B cell (primary cell): ENCODE measurements at regions of chr3 and their contacts with region 1.

Region 1: DNA sequence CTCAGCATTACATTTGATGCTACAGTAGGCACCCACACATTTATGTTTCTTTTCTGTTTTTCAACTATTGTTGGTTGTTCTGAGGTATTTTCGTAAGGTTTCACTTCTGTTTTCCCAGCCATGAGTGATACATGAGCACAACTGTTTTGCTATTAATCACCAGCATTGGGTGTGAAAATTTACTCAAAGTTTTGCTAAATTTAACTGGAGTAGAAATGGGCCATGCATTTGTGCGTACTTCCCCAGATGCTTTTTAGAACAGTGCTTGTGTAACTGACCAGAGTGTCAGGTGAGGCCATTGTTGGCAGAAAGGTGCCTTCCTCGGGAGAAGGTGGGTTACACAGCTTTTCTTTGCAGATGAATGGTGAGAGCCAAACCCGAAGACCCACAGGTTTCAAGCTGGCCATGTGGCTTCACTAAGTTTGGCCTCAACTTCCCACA is 70.4 kb downstream of the ST6GAL1 start:
- DNase-seq: peak; percentile 86
- ATAC-seq: peak; percentile 77
- H3K4me3 ChIP-seq: peak overlapping the region in 3 of 5 experiments; percentile 12 to 32 (median 22)
- H3K4me3 Mint-ChIP-seq: peak overlapping the region; percentile 88
- H3K27ac ChIP-seq: peak overlapping the region; percentile 94 to 98
- H3K27ac Mint-ChIP-seq: peak overlapping the region; percentile 99
- H3K4me1 ChIP-seq: peaks cover 82 to 93% of the 10 kb centered on the region in 2 donors
- H3K4me1 Mint-ChIP-seq: peaks cover 87% of the 10 kb centered on the region
- H3K27me3 ChIP-seq: no peaks in the 10 kb centered on the region
- H3K27me3 Mint-ChIP-seq: no peaks in the 10 kb centered on the region
- CTCF ChIP-seq: no peak

Region 2: DNA sequence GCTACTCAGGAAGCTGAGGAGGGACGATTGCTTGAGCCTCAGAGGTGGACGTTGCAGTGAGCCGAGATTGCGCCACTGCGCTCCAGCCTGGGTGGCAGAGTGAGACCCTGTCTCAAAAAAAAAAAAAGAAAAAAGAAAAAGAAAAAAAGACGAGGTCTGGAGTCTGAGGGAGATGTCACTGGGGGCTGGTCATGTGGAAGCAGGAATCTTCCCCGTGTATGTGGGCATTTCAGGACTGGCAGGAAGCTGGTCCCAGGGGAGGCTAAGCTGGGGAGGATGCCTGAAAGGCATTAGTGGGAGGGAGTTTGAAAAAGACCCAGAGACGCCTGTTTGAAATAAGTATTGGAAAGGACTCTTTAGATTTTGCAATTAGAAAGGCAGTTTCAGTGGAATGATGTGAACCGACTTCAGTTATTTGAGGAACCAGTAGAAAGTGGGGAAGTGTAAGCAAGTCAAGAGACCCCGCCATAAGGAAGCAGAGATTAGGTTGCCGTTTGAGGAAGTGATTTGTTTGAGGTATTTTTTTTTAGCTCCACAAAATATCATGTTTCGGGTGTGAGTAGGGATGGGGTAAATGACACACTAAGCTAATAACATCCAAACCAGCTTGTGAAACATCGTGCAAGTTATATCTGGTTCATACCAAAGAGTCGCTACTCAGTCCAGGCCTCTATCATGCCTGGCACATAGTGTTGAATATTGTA is 14.9 kb before region 1 on chr3:
- CTCF ChIA-PET with region 1: interaction called, 5 read pairs
- POLR2A ChIA-PET with region 1: interaction called, 6 read pairs
- intact Hi-C with region 1: loop called (anchors 1 kb)
- DNase-seq: peak; percentile 80
- ATAC-seq: peak; percentile 85
- H3K4me3 ChIP-seq: peak overlapping the region in 4 of 5 experiments; percentile 18 to 48 (median 27)
- H3K4me3 Mint-ChIP-seq: peak overlapping the region; percentile 78
- H3K27ac ChIP-seq: peak overlapping the region; percentile 78 to 80
- H3K27ac Mint-ChIP-seq: peak overlapping the region; percentile 82
- H3K4me1 ChIP-seq: peaks cover 64 to 83% of the 10 kb centered on the region in 2 donors
- H3K4me1 Mint-ChIP-seq: peaks cover 87% of the 10 kb centered on the region
- H3K27me3 ChIP-seq: no peaks in the 10 kb centered on the region
- H3K27me3 Mint-ChIP-seq: no peaks in the 10 kb centered on the region
- CTCF ChIP-seq: no peak

Region 3: GRCh38 chr3:187016639-187017345 is 16.1 kb after region 1 on chr3:
- CTCF ChIA-PET with region 1: interaction called, 8 read pairs
- POLR2A ChIA-PET with region 1: interaction called, 19 read pairs
- intact Hi-C with region 1: loop called (anchors 1 kb)
- DNase-seq: peak; percentile 83
- ATAC-seq: peak; percentile 58
- H3K4me3 ChIP-seq: peak overlapping the region in 2 of 5 experiments; percentile 4 to 28
- H3K4me3 Mint-ChIP-seq: peak overlapping the region; percentile 75
- H3K27ac ChIP-seq: peak overlapping the region; percentile 92 to 96
- H3K27ac Mint-ChIP-seq: peak overlapping the region; percentile 90
- H3K4me1 ChIP-seq: peaks cover 97% of the 10 kb centered on the region in 2 donors
- H3K4me1 Mint-ChIP-seq: peaks cover 92% of the 10 kb centered on the region
- H3K27me3 ChIP-seq: no peaks in the 10 kb centered on the region
- H3K27me3 Mint-ChIP-seq: no peaks in the 10 kb centered on the region
- CTCF ChIP-seq: no peak

Region 4: DNA sequence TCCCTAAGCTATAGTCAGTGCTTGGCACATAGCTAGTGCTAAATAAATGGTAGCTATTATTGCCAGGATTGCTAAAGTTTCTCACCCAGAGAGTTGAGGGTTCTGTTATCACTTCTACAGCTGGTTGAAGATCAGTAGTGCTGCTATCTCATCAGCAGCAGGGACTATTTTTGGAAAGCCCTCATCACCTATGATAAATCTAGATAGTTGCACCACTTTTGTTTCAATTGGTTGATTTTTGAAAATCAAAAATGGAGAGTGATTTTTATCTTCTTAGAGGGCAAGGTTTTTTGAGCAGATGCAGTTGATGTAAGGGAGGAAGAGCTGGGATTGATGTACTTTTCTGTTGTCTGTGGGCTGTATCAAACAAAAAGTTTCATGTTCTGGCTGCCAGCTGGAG is 31.2 kb after region 1 on chr3:
- CTCF ChIA-PET with region 1: interaction called, 5 read pairs
- POLR2A ChIA-PET with region 1: interaction called, 5 read pairs
- intact Hi-C with region 1: loop called (anchors 5 kb)
- DNase-seq: no peak
- ATAC-seq: no peak
- H3K4me3 ChIP-seq: peak overlapping the region in 2 of 5 experiments; percentile 5 to 20
- H3K4me3 Mint-ChIP-seq: peak overlapping the region; percentile 80
- H3K27ac ChIP-seq: peak overlapping the region; percentile 72 to 84
- H3K27ac Mint-ChIP-seq: peak overlapping the region; percentile 84
- H3K4me1 ChIP-seq: peaks cover 61 to 66% of the 10 kb centered on the region in 2 donors
- H3K4me1 Mint-ChIP-seq: peaks cover 86% of the 10 kb centered on the region
- H3K27me3 ChIP-seq: no peaks in the 10 kb centered on the region
- H3K27me3 Mint-ChIP-seq: no peaks in the 10 kb centered on the region
- CTCF ChIP-seq: no peak

Region 5: DNA sequence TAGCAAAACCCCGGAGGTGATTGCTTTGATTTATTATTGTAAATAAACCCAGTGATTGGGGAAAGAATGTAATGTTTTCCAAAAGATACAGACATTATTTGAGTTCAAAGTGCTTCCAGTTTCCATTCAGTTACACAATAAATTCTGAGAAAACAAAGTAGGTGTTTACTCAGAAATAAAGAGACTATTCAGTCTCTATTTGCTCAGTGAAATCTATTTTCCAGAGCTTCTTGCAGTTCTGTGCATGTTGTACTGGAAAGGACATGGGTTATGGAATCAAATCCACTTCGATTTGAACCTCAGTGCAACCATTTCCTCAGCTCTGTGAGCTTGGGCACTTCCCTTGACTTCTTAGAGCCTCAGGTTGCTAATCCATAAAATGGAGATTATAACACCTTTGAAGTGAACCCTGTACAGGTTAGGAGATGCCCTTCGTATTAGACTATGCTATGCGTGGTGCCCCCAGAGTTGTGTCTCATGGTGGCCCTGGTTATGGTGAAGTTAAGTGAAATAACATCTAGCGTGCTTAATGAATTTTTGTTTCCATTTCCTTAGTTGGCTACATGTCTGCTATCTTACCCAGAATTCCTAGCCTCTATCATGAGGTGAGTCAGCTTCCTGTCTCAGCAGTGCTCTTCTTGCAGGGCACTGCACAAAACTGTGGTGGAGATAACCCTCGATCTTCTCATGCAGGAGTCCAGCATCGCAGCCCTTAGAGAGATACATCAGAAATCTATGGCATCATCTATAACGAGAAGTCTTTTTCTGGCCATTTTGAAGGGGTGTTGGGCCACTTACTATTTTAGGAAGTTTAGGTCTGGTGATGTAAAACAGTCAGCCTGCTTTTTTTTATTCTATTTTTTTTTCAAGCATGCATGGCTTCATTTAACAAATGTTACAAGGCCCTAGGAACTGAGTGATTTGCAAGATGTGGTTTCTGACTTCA is 40.9 kb after region 1 on chr3:
- CTCF ChIA-PET with region 1: no interaction called
- POLR2A ChIA-PET with region 1: interaction called, 4 read pairs
- intact Hi-C with region 1: loop called (anchors 2 kb)
- DNase-seq: peak; percentile 70
- ATAC-seq: peak; percentile 79
- H3K4me3 ChIP-seq: peak overlapping the region in 1 of 5 experiments; percentile 31
- H3K4me3 Mint-ChIP-seq: peak overlapping the region; percentile 75
- H3K27ac ChIP-seq: peak overlapping the region; percentile 89 to 92
- H3K27ac Mint-ChIP-seq: peak overlapping the region; percentile 90
- H3K4me1 ChIP-seq: peaks cover 83 to 84% of the 10 kb centered on the region in 2 donors
- H3K4me1 Mint-ChIP-seq: peaks cover 84% of the 10 kb centered on the region
- H3K27me3 ChIP-seq: no peaks in the 10 kb centered on the region
- H3K27me3 Mint-ChIP-seq: no peaks in the 10 kb centered on the region
- CTCF ChIP-seq: no peak